B cell (primary cell): ENCODE measurements at regions of chr3 and their contacts with region 1.

Region 1: DNA sequence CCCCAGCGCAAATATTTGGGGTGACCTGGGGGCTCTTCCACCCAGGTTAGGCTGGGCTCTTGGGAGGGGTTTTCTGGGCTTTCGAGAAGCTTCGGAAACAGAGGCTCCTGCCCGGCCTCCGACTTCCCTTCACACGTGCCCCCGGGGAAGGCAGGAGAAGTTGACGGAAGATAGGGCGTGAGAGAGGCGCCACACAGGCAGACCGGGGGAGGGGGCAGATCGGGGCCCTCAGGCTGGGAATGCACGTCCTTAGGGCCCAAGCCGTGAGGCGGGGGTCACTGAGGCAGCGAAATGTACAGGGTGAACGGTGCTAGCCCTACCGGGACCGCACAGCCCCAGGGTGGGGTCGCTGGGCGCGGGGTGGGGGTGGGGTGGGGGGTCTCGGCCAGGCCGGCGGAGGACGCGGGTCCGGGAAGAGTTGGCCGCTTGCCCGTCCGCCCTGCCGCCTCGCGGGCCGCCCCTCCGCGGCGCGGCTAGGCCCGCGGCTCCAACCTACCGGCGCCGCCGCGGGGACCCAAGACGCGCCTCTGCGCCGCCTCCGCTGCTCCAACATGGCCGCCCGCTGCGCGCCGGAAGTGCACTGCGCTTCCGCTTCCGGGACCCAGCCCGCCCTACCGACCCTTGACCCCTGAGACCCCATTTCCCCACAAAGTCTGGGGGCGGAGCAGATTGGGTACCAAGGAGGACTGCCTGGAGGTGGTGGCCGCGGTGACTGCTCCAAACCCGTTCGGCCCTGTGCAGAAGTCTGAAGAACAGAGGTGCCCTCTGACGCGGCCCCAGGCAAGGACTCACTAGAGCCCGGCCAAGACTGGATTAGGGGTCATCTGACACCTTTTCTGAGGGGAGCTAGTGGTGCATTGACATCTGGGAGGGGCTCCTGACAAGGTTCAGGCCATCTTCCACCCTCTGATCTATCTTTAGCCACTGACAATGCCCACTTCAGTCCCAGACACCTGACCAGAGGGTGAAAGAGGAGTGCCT is at the start of gene CCDC71:
- DNase-seq: peak; percentile 84
- ATAC-seq: peak; percentile 73
- H3K4me3 ChIP-seq: peak within 1 kb of the TSS; percentile 55 to 97 (median 82)
- H3K4me3 Mint-ChIP-seq: peak within 1 kb of the TSS; percentile 90
- H3K27ac ChIP-seq: peak within 1 kb of the TSS; percentile 50 to 71
- H3K27ac Mint-ChIP-seq: peak within 1 kb of the TSS; percentile 94
- H3K4me1 ChIP-seq: peaks cover 25 to 31% of the 10 kb centered on the region in 2 donors
- H3K4me1 Mint-ChIP-seq: peaks cover 28% of the 10 kb centered on the region
- H3K27me3 ChIP-seq: peaks cover 0 to 7% (median 1%) of the 10 kb centered on the region in 4 experiments
- H3K27me3 Mint-ChIP-seq: peaks cover 7% of the 10 kb centered on the region
- CTCF ChIP-seq: no peak
- total RNA-seq, gene CCDC71: 29.7 and 30.0 TPM in 2 replicates

Region 2: DNA sequence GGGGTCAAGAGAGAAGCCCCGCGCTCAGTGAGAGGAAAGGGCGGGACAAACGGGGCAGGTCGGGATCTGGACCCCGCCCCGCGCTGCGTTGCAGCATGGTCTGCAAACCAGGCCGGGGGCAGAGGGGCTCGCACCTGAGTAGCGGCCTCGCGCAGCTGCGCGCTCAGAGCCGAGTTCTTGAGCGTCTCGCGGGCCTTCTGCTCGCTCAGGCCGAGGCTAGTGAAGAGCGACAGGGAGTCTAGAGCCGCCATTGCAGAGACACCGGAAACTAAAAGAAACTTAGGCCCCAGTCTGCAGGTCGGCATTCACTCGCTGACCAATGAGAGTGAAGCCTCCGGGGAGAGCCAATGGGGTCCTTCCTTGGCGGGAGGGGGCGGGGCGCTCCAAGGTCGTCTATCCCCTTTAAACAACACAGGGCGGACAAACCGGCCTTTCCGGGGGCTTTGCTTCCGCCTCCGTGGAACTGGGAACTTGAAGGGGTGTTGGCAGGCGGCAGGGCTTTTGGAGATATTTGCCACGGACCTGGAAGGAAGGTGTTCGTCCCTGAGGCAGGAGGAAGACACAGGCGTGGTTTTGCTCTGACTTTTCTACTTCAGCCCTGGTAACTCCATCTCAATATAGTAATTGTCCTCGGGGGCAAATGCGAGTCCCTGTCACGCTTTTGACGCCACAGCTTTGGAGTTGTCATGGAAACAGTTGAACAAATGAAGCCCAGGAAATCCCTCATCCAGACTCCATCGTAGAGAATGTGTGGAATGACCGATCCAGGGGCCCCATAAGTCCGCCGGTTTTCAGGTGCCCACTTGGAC is 61.4 kb before region 1 on chr3 and contains the start of gene QARS1:
- CTCF ChIA-PET with region 1: interaction called, 3 read pairs
- POLR2A ChIA-PET with region 1: no interaction called
- intact Hi-C with region 1: loop called (anchors 1 kb)
- DNase-seq: peak; percentile 90
- ATAC-seq: peak; percentile 99
- H3K4me3 ChIP-seq: peak within 1 kb of the TSS; percentile 72 to 98 (median 93)
- H3K4me3 Mint-ChIP-seq: peak within 1 kb of the TSS; percentile 95
- H3K27ac ChIP-seq: peak within 1 kb of the TSS; percentile 61 to 81
- H3K27ac Mint-ChIP-seq: peak within 1 kb of the TSS; percentile 94
- H3K4me1 ChIP-seq: peaks cover 11 to 18% of the 10 kb centered on the region in 2 donors
- H3K4me1 Mint-ChIP-seq: peaks cover 27% of the 10 kb centered on the region
- H3K27me3 ChIP-seq: no peaks in the 10 kb centered on the region
- H3K27me3 Mint-ChIP-seq: no peaks in the 10 kb centered on the region
- CTCF ChIP-seq: no peak
- total RNA-seq, gene QARS1: 252 and 282 TPM in 2 replicates